Activated CD4-positive, alpha-beta memory T cell treated with anti-CD3 and anti-CD28 coated beads for 36 hours (primary cell): ENCODE measurements at regions of chr15 and their contacts with region 1.

Region 1: GRCh38 chr15:35673093-35673684 is 127.2 kb upstream of the DPH6 start:
- DNase-seq: peak; percentile 32
- H3K4me3 Mint-ChIP-seq: no peak overlapping the region
- H3K27ac Mint-ChIP-seq: no peak overlapping the region
- H3K4me1 Mint-ChIP-seq: peaks cover 12% of the 10 kb centered on the region
- H3K27me3 Mint-ChIP-seq: peaks cover 10% of the 10 kb centered on the region

Region 2: GRCh38 chr15:34993877-34994276 is 679.3 kb before region 1 on chr15:
- CTCF ChIA-PET with region 1: no interaction called
- POLR2A ChIA-PET with region 1: no interaction called
- intact Hi-C with region 1: loop called (anchors 2 kb)
- DNase-seq: peak; percentile 64
- H3K4me3 Mint-ChIP-seq: peak overlapping the region; percentile 53
- H3K27ac Mint-ChIP-seq: peak overlapping the region; percentile 90
- H3K4me1 Mint-ChIP-seq: peaks cover 30% of the 10 kb centered on the region
- H3K27me3 Mint-ChIP-seq: peaks cover 8% of the 10 kb centered on the region

Region 3: DNA sequence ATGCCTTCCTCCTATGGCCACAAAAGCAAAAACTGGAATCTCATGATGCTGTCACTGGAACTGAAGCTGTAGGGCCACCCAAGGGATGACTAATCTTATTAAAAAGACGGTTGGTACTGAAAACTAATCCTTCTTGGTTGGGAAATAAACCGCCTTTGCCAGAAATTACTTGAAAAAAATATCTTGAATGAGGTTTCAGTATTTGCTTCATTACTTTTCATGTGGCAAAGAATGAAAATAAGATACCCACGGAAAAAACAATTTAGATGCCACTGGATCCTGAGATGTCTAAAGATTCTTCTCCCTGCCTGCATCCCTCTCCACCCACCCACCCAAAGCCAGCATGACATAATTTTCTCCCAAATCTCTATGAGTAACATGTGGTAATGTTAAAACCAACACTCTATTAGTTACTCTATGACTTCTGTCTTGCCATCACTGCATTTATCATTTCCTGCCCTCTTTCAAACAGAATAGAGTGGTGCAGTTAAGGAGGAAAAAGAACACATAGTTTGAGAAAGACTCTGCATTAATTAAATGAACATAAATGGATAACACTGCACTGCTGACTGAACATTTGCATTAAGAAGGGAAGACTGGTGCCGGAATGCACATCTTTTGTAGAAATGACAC is 15.4 kb before region 1 on chr15:
- CTCF ChIA-PET with region 1: no interaction called
- POLR2A ChIA-PET with region 1: no interaction called
- intact Hi-C with region 1: loop called (anchors 1 kb)
- DNase-seq: peak; percentile 65
- H3K4me3 Mint-ChIP-seq: no peak overlapping the region
- H3K27ac Mint-ChIP-seq: peak overlapping the region; percentile 26
- H3K4me1 Mint-ChIP-seq: peaks cover 11% of the 10 kb centered on the region
- H3K27me3 Mint-ChIP-seq: peaks cover 19% of the 10 kb centered on the region

Region 4: GRCh38 chr15:35784745-35785144 is 111.6 kb after region 1 on chr15:
- CTCF ChIA-PET with region 1: no interaction called
- POLR2A ChIA-PET with region 1: no interaction called
- intact Hi-C with region 1: no loop called
- DNase-seq: no peak
- H3K4me3 Mint-ChIP-seq: no peak overlapping the region
- H3K27ac Mint-ChIP-seq: no peak overlapping the region
- H3K4me1 Mint-ChIP-seq: no peaks in the 10 kb centered on the region
- H3K27me3 Mint-ChIP-seq: peaks cover 1% of the 10 kb centered on the region